Lower leg skin (tissue), 4 donors: ENCODE measurements at regions of chr10 and their contacts with region 1.

Region 1: DNA sequence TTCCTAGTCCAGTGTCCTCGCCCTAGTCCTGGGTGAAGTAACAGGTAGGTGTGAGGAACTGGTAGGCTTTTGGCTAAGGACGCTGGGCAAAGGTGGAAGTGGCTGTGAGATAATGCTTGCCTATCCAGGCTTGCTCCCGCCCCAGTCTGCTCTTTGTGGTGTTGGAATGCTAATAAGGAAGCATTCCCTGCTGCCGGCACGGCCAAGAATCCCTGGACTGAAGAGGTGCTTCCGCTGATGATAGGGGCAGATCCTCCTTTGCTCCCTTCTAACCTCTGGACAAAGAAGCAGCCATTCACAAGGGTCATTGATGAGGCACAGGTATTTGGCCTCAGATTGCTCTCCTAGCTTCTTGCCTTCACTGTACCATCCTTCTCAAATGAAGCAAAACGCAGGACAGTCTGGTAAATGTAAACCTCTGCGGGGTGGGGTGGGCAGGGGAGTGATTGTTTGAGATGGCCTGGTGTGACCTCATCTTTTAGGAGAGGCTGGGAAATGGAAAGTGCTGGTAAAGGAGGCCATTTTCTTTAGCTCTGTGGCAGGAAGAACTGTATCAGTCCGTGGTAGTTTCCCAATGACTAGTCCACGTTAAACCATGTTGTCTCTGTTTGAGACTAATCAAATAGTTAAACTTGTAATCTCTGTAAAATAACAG is 1.7 kb downstream of the PGAM1 start:
- DNase-seq: no peak
- H3K4me3 ChIP-seq: no peak overlapping the region
- CTCF ChIP-seq: no peak
- POLR2A ChIP-seq: no peak

Region 2: GRCh38 chr10:97442277-97442676 is 14.6 kb after region 1 on chr10:
- intact Hi-C with region 1: loop called (anchors 1 kb)
- DNase-seq: no peak
- H3K4me3 ChIP-seq: no peak overlapping the region
- CTCF ChIP-seq: no peak
- POLR2A ChIP-seq: no peak